AG04449 (cell line): ENCODE measurements at regions of chr15 and their contacts with region 1.

Region 1: DNA sequence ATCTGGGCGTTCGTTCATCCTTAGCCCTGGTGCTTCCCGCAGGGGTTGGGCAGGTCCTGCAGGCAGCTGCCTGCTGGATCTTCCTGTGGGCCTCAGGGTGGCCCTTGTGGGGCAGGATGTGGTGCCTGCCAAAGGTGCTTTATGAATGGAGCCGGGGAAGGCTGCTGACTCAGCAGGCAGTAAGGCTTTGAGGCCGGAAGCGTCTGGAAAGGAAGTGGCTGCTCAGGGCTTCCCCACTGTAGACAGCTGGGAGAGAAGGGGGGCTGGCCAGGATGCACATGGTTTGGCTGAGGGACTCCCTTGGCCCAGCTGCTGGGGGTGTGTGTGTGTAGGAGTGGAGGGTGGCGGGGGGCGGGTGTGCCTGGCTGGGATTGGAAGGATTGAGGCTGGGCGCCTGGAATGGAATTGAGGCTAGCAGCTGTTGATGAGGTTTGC is 12.9 kb downstream of the CD276 start:
- DNase-seq: peak; percentile 44
- H3K4me3 ChIP-seq: no peak overlapping the region
- CTCF ChIP-seq: no peak

Region 2: DNA sequence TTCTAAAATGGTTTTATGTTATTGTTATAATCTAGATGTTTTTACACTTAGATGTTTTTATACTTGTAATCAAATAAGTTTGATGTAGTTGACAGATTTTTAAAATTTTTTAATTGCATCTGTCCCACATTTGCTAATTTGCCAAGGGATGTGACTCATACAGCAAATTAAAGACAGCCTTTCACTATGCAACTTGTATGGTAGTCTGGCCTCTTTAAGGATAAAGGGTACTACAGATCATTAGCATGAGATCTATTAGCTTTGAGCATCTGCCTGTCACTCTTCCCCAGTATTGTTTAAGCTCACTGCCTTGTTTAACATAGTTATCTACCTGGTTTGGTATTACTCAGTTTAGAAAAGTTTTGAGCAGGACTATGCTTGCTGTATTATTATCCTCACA is 146.9 kb before region 1 on chr15:
- CTCF ChIA-PET with region 1: interaction called, 38 read pairs
- POLR2A ChIA-PET with region 1: no interaction called
- DNase-seq: no peak
- H3K4me3 ChIP-seq: no peak overlapping the region
- CTCF ChIP-seq: no peak

Region 3: GRCh38 chr15:73593304-73594074 is 103.6 kb before region 1 on chr15:
- CTCF ChIA-PET with region 1: interaction called, 11 read pairs
- POLR2A ChIA-PET with region 1: no interaction called
- DNase-seq: no peak
- H3K4me3 ChIP-seq: no peak overlapping the region
- CTCF ChIP-seq: no peak

Region 4: DNA sequence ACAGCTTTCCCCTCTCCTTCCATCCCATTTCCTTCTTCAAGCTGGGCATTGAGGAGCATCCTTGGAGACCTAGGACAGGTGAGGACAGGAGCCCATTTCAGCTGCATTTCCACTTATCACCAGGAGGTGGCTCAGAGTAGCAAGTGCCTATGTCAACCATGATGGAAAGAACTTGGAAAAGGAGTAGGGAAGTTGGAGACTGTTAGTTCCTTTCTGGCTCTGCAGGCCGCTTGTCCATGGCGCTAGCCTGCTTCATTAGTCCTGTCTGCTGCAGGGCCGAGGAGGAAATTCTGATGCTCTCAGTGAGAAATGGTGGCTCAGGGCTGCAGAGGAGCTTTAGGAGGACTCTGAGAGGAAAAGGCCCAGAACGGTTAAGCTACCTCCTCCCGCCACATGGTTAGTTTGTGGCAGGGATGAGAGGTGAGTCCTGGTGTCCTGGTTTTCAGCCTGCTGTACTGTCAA is 19.9 kb before region 1 on chr15:
- CTCF ChIA-PET with region 1: interaction called, 378 read pairs
- POLR2A ChIA-PET with region 1: no interaction called
- DNase-seq: no peak
- H3K4me3 ChIP-seq: no peak overlapping the region
- CTCF ChIP-seq: peak; percentile 81

Region 5: GRCh38 chr15:73717802-73718201 is 20.8 kb after region 1 on chr15:
- CTCF ChIA-PET with region 1: interaction called, 27 read pairs
- POLR2A ChIA-PET with region 1: no interaction called
- DNase-seq: no peak
- H3K4me3 ChIP-seq: no peak overlapping the region
- CTCF ChIP-seq: no peak

Region 6: GRCh38 chr15:73809733-73810501 is 112.9 kb after region 1 on chr15:
- CTCF ChIA-PET with region 1: no interaction called
- POLR2A ChIA-PET with region 1: no interaction called
- DNase-seq: no peak
- H3K4me3 ChIP-seq: no peak overlapping the region
- CTCF ChIP-seq: no peak